Heart left ventricle (tissue), 16 donors: ENCODE measurements at regions of chr11 and their contacts with region 1.

Region 1: DNA sequence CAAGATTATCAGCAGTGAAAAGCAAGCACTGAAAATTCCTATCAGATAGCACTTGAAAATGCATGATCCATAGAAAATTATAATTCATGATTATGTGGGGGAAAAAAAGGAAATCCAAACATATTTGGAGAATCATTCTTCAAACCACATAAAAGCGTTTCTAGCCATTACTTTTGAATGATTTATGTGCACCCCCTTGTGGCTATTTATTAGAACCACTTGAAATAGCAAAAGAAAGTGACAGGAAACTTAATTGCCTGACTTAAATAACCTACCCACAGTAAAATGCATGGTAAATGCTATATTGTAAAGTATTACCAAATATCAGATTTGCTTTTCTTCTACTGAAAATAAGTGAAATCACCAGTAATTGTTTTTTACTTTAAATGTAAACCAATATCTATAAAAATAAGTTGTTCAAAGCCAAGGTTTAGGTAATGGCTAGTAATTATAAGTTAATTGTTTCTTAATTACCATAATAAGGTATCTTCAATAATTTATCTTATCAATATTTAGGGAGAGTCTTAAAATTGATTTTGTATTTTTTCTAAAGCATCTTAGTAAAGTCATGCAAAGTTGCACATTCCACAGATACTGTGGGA is 168.5 kb downstream of the ARHGAP42 start:
- DNase-seq: no peak
- ATAC-seq: peak in 1 of 4 donors; percentile 51
- H3K4me3 ChIP-seq: no peak overlapping the region
- H3K27ac ChIP-seq: no peak overlapping the region
- H3K4me1 ChIP-seq: peaks cover 0 to 8% (median 2%) of the 10 kb centered on the region in 12 donors
- H3K27me3 ChIP-seq: no peaks in the 10 kb centered on the region
- CTCF ChIP-seq: peak; percentile 48 to 81 (median 71)
- POLR2A ChIP-seq: no peak

Region 2: GRCh38 chr11:100575870-100576705 is 279.5 kb before region 1 on chr11:
- intact Hi-C with region 1: loop called (anchors 1 to 5 kb)
- DNase-seq: peak in 1 of 5 donors; percentile 12
- ATAC-seq: peak in 3 of 4 donors; percentile 77 to 84 (median 80)
- H3K4me3 ChIP-seq: peak overlapping the region in 3 of 12 donors; percentile 17 to 27 (median 26)
- H3K27ac ChIP-seq: no peak overlapping the region
- H3K4me1 ChIP-seq: peaks cover 0 to 4% (median 0%) of the 10 kb centered on the region in 12 donors
- H3K27me3 ChIP-seq: no peaks in the 10 kb centered on the region
- CTCF ChIP-seq: peak; percentile 67 to 90 (median 73)
- POLR2A ChIP-seq: no peak

Region 3: DNA sequence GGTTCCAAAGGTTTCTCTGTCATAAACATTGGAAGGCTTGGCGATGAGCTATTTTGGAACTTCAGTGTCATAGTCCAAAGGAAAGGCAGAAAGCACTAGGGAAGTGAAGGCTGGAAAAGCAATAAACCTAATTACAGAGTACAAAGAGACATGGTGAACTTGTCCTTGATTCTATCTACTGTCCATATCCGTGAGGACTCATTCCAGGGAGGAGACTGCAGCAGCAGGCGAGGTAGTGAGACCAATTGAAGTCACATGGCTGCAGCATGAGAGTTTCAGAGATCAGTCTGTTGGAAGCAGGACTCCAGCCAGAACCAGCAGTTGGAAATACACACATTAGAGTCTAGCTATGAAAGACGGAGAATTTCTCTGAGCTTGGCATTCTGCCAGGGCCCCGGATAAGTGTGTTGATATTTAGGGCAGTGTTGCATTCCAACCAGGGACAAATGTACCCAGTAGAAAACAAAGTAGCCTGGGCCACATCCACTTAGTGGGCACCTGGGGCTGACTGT is 222.6 kb before region 1 on chr11:
- intact Hi-C with region 1: loop called in 1 of 10 experiments (anchors 5 kb)
- DNase-seq: peak; percentile 65 to 88 (median 77)
- ATAC-seq: peak; percentile 90 to 95 (median 93)
- H3K4me3 ChIP-seq: peak overlapping the region in 3 of 12 donors; percentile 8 to 23 (median 11)
- H3K27ac ChIP-seq: peak overlapping the region in 11 of 12 donors; percentile 36 to 83 (median 60)
- H3K4me1 ChIP-seq: peaks cover 0 to 33% (median 14%) of the 10 kb centered on the region in 12 donors
- H3K27me3 ChIP-seq: no peaks in the 10 kb centered on the region
- CTCF ChIP-seq: no peak
- POLR2A ChIP-seq: no peak